Endothelial cell of umbilical vein (primary cell): ENCODE measurements at regions of chr19 and their contacts with region 1.

Region 1: GRCh38 chr19:53511933-53512374 is 26.0 kb upstream of the ZNF331 start:
- DNase-seq: peak; percentile 57
- H3K4me3 ChIP-seq: no peak overlapping the region
- H3K27ac ChIP-seq: no peak overlapping the region
- H3K4me1 ChIP-seq: no peaks in the 10 kb centered on the region
- H3K27me3 ChIP-seq: no peaks in the 10 kb centered on the region
- CTCF ChIP-seq: peak; percentile 58 to 82
- POLR2A ChIP-seq: no peak

Region 2: DNA sequence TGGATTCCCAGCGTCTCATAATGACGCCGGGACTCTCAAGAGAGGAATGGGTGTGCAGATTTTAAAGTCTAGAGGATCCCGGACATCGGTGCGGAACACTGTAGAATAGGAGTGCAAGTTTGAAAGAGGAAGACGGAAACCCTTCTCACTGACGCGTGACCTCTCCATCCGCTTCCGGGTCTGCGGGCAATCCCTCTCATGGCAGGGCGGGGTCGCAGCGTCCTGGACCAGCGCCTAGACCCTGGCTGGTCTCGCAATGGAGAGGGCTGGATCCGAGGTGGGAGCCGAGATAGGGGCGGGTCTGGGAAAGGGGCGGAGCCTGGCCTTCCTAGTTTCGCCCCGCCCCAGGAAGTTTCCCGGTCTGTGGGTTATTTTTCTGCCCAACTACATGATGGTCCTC is 183.0 kb before region 1 on chr19:
- CTCF ChIA-PET with region 1: no interaction called
- POLR2A ChIA-PET with region 1: no interaction called
- dilution Hi-C with region 1: no loop called
- intact Hi-C with region 1: no loop called
- DNase-seq: no peak
- H3K4me3 ChIP-seq: no peak overlapping the region
- H3K27ac ChIP-seq: no peak overlapping the region
- H3K4me1 ChIP-seq: peaks cover 2% of the 10 kb centered on the region
- H3K27me3 ChIP-seq: no peaks in the 10 kb centered on the region
- CTCF ChIP-seq: no peak
- POLR2A ChIP-seq: no peak

Region 3: GRCh38 chr19:53424968-53425597 is 86.9 kb before region 1 on chr19:
- CTCF ChIA-PET with region 1: interaction called, 12 read pairs
- POLR2A ChIA-PET with region 1: no interaction called
- dilution Hi-C with region 1: no loop called
- intact Hi-C with region 1: loop called (anchors 1 kb)
- DNase-seq: peak; percentile 58
- H3K4me3 ChIP-seq: no peak overlapping the region
- H3K27ac ChIP-seq: no peak overlapping the region
- H3K4me1 ChIP-seq: no peaks in the 10 kb centered on the region
- H3K27me3 ChIP-seq: no peaks in the 10 kb centered on the region
- CTCF ChIP-seq: peak; percentile 71 to 89
- POLR2A ChIP-seq: no peak

Region 4: GRCh38 chr19:53537480-53538383 is 25.8 kb after region 1 on chr19 and contains the start of gene ZNF331:
- CTCF ChIA-PET with region 1: no interaction called
- POLR2A ChIA-PET with region 1: no interaction called
- dilution Hi-C with region 1: no loop called
- intact Hi-C with region 1: no loop called
- DNase-seq: peak; percentile 82
- H3K4me3 ChIP-seq: peak within 1 kb of the TSS in 2 of 3 experiments; percentile 63 to 64
- H3K27ac ChIP-seq: no peak within 1 kb of the TSS
- H3K4me1 ChIP-seq: no peaks in the 10 kb centered on the region
- H3K27me3 ChIP-seq: no peaks in the 10 kb centered on the region
- CTCF ChIP-seq: peak; percentile 29 to 51
- POLR2A ChIP-seq: peak; percentile 48
- total RNA-seq, gene ZNF331: 11.2 TPM in 2 replicates